Activated CD4-positive, alpha-beta memory T cell treated with anti-CD3 and anti-CD28 coated beads, Interleukin-2, amount 10 ng/mL, durations not matched to agents 7 days and 5 days (primary cell): ENCODE measurements at regions of chr9 and their contacts with region 1.

Region 1: DNA sequence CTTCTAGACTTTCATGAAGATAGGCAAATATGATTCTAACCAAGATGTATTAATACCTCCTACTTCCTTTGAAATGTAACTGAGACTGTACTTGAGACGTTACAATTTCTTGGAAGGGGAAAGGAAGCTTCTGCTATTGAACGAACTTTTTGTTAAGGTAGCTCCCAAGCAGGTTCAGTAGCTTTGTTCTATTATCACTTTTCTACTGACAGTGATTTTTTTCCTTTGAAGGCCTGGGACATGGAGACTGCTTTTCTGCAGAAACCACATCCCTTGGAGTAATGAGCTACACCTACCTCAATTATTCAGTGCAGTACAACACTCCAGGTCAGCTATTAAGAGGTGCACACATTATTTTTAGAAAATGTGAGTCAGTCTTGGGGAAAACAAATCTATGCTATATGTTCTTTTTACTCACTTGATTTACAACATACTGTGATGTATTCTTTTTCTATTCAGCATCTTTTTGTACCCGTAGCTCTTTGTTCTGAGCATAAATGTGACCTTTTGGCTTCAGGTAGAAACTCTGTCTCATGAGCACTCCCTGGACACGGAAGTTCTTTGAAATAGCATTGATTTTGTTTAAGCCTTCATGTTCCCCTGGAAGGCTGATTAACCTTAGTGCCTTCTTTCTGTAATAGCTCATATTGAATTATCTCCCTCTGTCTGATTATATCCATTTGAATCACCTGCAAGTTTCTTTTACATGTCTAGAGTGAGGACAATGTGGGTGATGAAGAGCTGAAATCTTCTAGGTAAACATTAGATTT is 56.5 kb upstream of the CDKN2B start:
- DNase-seq: no peak
- H3K4me3 Mint-ChIP-seq: no peak overlapping the region
- H3K27ac Mint-ChIP-seq: peak overlapping the region; percentile 75
- H3K4me1 Mint-ChIP-seq: peaks cover 46% of the 10 kb centered on the region
- H3K27me3 Mint-ChIP-seq: peaks cover 10% of the 10 kb centered on the region

Region 2: GRCh38 chr9:22037954-22038690 is 27.5 kb before region 1 on chr9:
- CTCF ChIA-PET with region 1: interaction called, 4 read pairs
- POLR2A ChIA-PET with region 1: interaction called, 13 read pairs
- DNase-seq: no peak
- H3K4me3 Mint-ChIP-seq: no peak overlapping the region
- H3K27ac Mint-ChIP-seq: no peak overlapping the region
- H3K4me1 Mint-ChIP-seq: peaks cover 44% of the 10 kb centered on the region
- H3K27me3 Mint-ChIP-seq: peaks cover 21% of the 10 kb centered on the region

Region 3: GRCh38 chr9:22052376-22052945 is 13.2 kb before region 1 on chr9:
- CTCF ChIA-PET with region 1: interaction called, 6 read pairs
- POLR2A ChIA-PET with region 1: interaction called, 10 read pairs
- DNase-seq: peak; percentile 34
- H3K4me3 Mint-ChIP-seq: no peak overlapping the region
- H3K27ac Mint-ChIP-seq: peak overlapping the region; percentile 37
- H3K4me1 Mint-ChIP-seq: peaks cover 40% of the 10 kb centered on the region
- H3K27me3 Mint-ChIP-seq: peaks cover 8% of the 10 kb centered on the region